MCF 10A (cell line): ENCODE measurements at regions of chr5 and their contacts with region 1.

Region 1: GRCh38 chr5:1930880-1931603 is 48.3 kb upstream of the IRX4 start:
- DNase-seq: peak; percentile 52
- H3K4me3 Mint-ChIP-seq: no peak overlapping the region
- H3K27ac Mint-ChIP-seq: no peak overlapping the region
- H3K4me1 Mint-ChIP-seq: peaks cover 8% of the 10 kb centered on the region
- H3K27me3 Mint-ChIP-seq: no peaks in the 10 kb centered on the region
- CTCF ChIP-seq: no peak

Region 2: GRCh38 chr5:1799602-1800471 is 131.2 kb before region 1 on chr5 and contains the start of gene MRPL36:
- CTCF ChIA-PET with region 1: interaction called, 4 read pairs
- POLR2A ChIA-PET with region 1: interaction called, 10 read pairs
- intact Hi-C with region 1: no loop called
- DNase-seq: peak; percentile 90
- H3K4me3 Mint-ChIP-seq: peak within 1 kb of the TSS; percentile 98
- H3K27ac Mint-ChIP-seq: peak within 1 kb of the TSS; percentile 97
- H3K4me1 Mint-ChIP-seq: peaks cover 29% of the 10 kb centered on the region
- H3K27me3 Mint-ChIP-seq: no peaks in the 10 kb centered on the region
- CTCF ChIP-seq: no peak
- total RNA-seq, gene MRPL36: 90.5 and 101 TPM in 2 replicates

Region 3: GRCh38 chr5:1889321-1890065 is 41.5 kb before region 1 on chr5:
- CTCF ChIA-PET with region 1: interaction called, 6 read pairs
- POLR2A ChIA-PET with region 1: interaction called, 69 read pairs
- intact Hi-C with region 1: loop called (anchors 2 kb)
- DNase-seq: peak; percentile 80
- H3K4me3 Mint-ChIP-seq: peak overlapping the region; percentile 32
- H3K27ac Mint-ChIP-seq: peak overlapping the region; percentile 84
- H3K4me1 Mint-ChIP-seq: peaks cover 17% of the 10 kb centered on the region
- H3K27me3 Mint-ChIP-seq: no peaks in the 10 kb centered on the region
- CTCF ChIP-seq: no peak

Region 4: GRCh38 chr5:1913578-1913977 is 17.5 kb before region 1 on chr5:
- CTCF ChIA-PET with region 1: no interaction called
- POLR2A ChIA-PET with region 1: no interaction called
- intact Hi-C with region 1: no loop called
- DNase-seq: no peak
- H3K4me3 Mint-ChIP-seq: no peak overlapping the region
- H3K27ac Mint-ChIP-seq: no peak overlapping the region
- H3K4me1 Mint-ChIP-seq: peaks cover 6% of the 10 kb centered on the region
- H3K27me3 Mint-ChIP-seq: no peaks in the 10 kb centered on the region
- CTCF ChIP-seq: no peak

Region 5: DNA sequence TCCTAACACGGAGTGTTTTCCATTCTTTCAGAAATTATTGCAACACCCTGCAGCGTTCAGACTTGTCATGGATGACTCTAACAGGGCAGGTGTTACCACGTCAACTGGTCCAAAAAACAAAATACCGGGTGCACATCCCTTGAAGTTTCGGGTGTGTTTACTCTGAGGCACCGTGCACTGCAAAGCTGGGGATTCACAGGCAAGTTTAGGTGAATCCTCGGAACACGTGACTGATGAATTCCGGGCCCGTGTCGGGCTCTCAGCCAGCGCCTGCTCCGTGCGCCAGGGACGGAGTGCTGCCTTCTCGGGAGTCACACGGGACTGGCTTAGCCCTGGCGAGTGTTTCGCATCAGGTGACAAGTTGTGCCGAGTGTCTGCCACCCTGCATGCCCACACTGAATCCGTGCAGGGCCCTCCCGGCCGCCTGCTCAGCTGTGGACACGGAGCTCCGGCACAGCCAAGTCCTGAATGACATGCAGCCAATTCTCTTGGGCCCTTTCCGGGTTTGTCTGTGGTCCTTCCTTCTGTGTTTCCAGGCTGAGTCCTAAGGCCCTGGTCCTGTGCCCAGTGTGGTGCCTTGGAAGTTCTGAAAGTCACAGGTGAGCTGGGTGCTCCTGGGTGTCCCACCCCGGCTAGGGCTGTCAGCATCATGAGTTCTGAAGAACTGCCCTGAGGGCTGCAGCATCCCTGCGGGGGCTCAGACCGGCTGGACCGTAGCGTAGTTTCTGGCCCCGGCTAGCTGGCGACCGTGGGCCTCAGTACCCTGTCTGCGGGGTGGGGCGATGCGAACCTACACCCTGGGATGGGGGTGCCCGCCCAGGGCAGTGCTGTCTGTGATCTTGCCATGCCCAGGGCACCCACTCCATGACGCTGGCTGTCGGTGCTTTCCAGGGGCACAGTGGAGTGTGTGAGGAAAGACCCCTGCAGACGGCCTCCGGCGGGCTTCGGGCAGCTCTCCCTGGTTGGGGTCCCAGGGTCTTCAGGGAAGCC is 17.9 kb after region 1 on chr5:
- CTCF ChIA-PET with region 1: interaction called, 5 read pairs
- POLR2A ChIA-PET with region 1: interaction called, 58 read pairs
- intact Hi-C with region 1: no loop called
- DNase-seq: peak; percentile 93
- H3K4me3 Mint-ChIP-seq: peak overlapping the region; percentile 67
- H3K27ac Mint-ChIP-seq: peak overlapping the region; percentile 96
- H3K4me1 Mint-ChIP-seq: peaks cover 28% of the 10 kb centered on the region
- H3K27me3 Mint-ChIP-seq: no peaks in the 10 kb centered on the region
- CTCF ChIP-seq: no peak

Region 6: DNA sequence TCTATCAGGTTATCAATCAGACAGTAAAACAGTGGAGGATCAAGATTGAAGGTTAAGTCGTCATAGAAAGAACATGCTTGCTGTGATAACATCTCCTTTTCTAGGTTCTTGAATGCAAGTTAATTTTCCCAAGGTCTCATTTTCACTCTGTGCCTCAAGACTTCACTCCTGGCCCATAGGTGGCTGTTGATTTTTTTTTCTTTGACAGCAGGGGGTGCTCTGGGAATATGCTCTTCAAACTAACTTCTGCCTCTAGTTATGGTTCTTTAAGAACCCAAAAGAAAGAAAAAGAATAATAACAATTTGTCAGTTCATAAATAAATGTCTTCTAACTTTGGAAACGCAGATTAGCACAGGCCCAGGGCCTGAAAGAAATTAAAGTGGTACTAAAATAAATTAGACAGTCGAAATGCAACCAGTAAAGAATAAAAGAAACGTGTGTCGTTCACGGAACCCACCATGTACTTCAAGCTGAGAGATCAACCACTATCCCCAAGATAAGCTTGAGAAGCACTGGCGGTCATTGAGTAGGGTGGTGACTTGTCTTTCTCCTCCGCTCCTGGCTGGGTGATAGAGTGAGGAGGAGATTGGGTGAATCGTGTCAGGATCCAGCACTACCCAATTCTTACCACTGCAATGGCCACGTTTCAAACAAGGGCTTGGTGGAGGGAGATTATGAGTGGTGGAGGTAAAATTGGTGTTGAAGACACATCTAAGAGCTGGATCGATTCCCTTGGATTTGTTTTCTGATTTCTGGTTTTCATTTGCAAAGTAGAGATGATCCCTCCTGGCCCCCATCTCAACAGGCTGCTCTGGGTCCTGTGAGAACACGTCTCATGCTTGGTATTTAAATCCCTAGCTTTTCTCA is 45.1 kb after region 1 on chr5:
- CTCF ChIA-PET with region 1: no interaction called
- POLR2A ChIA-PET with region 1: interaction called, 48 read pairs
- intact Hi-C with region 1: no loop called
- DNase-seq: peak; percentile 51
- H3K4me3 Mint-ChIP-seq: no peak overlapping the region
- H3K27ac Mint-ChIP-seq: no peak overlapping the region
- H3K4me1 Mint-ChIP-seq: peaks cover 33% of the 10 kb centered on the region
- H3K27me3 Mint-ChIP-seq: no peaks in the 10 kb centered on the region
- CTCF ChIP-seq: peak; percentile 11

Region 7: DNA sequence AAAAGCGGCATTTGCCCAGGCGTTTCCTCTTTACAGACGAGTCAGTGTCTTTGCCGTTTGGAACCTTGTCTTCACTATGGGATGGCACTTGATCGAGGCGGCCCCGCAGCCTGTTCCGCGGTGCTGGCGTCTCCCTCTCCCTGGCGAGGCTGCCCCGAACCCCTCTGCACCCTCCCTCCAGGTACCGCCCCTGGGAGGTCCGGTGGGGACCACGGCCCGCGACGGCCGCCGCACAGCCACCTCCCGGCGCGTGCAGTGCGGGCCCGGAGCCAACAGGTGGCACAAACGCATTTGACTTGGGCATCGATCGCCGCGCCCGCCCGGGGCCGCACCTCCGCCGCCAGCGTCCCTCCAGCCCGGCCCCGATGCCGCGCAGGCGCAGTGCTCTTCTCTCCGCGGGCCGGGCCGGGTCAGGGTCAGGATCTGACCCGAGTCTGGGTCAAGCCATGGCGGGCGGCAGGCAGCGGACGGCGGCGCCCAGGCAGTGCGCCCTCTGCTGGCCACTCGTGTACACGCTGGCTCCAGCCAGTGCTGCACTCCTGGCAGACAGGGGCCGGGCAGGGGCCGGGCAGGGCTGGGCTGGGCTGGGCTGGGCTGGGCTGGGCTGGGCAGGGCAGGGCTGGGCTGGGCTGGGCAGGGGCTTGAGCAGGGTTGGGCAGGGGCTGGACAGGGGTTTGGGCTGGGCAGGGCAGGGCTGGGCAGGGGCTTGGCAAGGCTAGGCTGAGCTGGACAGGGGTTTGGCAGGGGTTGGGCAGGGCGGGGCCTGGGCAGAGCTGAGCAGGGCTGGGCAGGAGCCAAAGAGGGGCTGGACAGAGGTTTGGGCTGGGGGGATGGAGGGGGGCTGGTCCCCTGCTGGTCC is 107.5 kb after region 1 on chr5:
- CTCF ChIA-PET with region 1: no interaction called
- POLR2A ChIA-PET with region 1: interaction called, 3 read pairs
- intact Hi-C with region 1: loop called (anchors 10 kb)
- DNase-seq: peak; percentile 68
- H3K4me3 Mint-ChIP-seq: peak overlapping the region; percentile 71
- H3K27ac Mint-ChIP-seq: no peak overlapping the region
- H3K4me1 Mint-ChIP-seq: no peaks in the 10 kb centered on the region
- H3K27me3 Mint-ChIP-seq: peaks cover 27% of the 10 kb centered on the region
- CTCF ChIP-seq: peak; percentile 83